ENCODE measurements at regions of chr1 and their contacts with region 1.

Region 1: DNA sequence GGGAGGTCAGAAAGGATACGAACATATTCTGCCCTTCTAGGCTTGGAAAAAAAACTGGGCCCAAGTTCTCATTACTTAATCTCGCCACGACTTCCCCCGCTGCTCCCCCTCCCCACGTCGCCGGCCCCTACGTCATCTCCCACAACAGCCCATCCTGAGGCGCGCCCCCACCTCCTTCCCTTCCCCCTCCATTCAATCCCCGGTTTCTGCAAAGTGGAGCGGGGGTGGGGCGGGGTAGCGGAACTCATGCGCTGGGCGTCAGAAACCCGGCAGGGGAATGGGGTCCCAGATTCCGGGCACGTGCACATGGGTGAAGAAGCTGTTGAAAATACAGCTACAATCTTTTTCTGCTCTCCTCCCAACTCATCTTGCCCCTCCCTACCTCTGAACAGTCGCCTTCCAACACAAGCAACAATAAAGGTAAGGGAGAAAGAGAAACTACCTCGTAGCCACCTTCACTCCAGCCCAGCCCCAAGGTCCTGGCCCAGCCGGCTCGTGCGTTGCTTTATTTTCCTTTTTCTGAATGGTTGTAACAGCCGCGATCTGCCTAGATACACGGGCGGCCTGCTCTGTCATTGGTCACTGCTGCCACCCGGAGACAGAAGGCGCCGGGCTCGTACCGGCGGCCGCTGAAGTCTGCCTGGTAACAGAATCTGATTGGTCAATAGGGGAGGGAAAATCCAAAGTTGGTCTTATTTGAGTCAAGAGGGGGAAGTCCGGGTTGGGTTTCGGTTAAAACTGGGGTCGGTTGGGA is at the start of gene RFX5:
- DNase-seq: peak; percentile 88 to 98
- ATAC-seq: peak; percentile 92 to 97 (median 92)
- H3K4me3 ChIP-seq: peak within 1 kb of the TSS; percentile 56
- H3K4me3 Mint-ChIP-seq: peak within 1 kb of the TSS; percentile 99
- H3K27ac ChIP-seq: peak within 1 kb of the TSS; percentile 89
- H3K27ac Mint-ChIP-seq: peak within 1 kb of the TSS; percentile 100
- H3K4me1 ChIP-seq: peaks cover 16% of the 10 kb centered on the region
- H3K4me1 Mint-ChIP-seq: peaks cover 31 to 32% of the 10 kb centered on the region in 2 donors
- H3K27me3 ChIP-seq: no peaks in the 10 kb centered on the region
- H3K27me3 Mint-ChIP-seq: no peaks in the 10 kb centered on the region
- CTCF ChIP-seq: no peak
- total RNA-seq, gene RFX5: 72.6 to 111 (median 110) TPM

Region 2: DNA sequence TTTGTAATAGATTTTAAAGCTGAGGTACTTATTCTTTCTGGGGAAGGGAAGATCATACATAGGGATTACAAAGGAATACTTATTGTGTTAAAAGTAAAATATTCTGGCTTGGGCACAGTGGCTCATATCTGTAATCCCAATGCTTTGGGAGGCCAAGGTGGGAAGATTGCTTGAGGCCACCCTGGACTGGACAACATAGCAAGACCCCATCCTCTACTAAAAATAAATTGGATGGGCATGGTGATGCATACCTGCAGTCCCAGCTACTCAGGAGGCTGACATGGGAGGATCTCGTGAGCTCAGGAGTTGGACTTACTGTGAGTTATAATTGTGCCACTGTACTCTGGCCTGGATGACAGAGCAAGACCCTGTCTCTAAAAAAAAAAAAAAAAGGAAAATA is 248.8 kb before region 1 on chr1:
- intact Hi-C with region 1: loop called (anchors 10 kb)
- DNase-seq: no peak
- ATAC-seq: no peak
- H3K4me3 ChIP-seq: no peak overlapping the region
- H3K4me3 Mint-ChIP-seq: no peak overlapping the region
- H3K27ac ChIP-seq: no peak overlapping the region
- H3K27ac Mint-ChIP-seq: no peak overlapping the region
- H3K4me1 ChIP-seq: no peaks in the 10 kb centered on the region
- H3K4me1 Mint-ChIP-seq: no peaks in the 10 kb centered on the region
- H3K27me3 ChIP-seq: no peaks in the 10 kb centered on the region
- H3K27me3 Mint-ChIP-seq: no peaks in the 10 kb centered on the region
- CTCF ChIP-seq: no peak

Region 3: GRCh38 chr1:151189638-151190445 is 157.1 kb before region 1 on chr1 and contains the start of gene VPS72:
- intact Hi-C with region 1: loop called (anchors 2 kb)
- DNase-seq: peak; percentile 73 to 93
- ATAC-seq: peak; percentile 95 to 98 (median 96)
- H3K4me3 ChIP-seq: peak within 1 kb of the TSS; percentile 89
- H3K4me3 Mint-ChIP-seq: peak within 1 kb of the TSS; percentile 100
- H3K27ac ChIP-seq: peak within 1 kb of the TSS; percentile 85
- H3K27ac Mint-ChIP-seq: peak within 1 kb of the TSS; percentile 97 to 98
- H3K4me1 ChIP-seq: peaks cover 19% of the 10 kb centered on the region
- H3K4me1 Mint-ChIP-seq: peaks cover 33 to 40% of the 10 kb centered on the region in 2 donors
- H3K27me3 ChIP-seq: no peaks in the 10 kb centered on the region
- H3K27me3 Mint-ChIP-seq: peaks cover 6 to 7% of the 10 kb centered on the region in 2 donors
- CTCF ChIP-seq: no peak
- total RNA-seq, gene VPS72: 26.2 to 45.1 (median 44.8) TPM

Region 4: GRCh38 chr1:151327223-151327902 is 19.6 kb before region 1 on chr1 and contains the start of gene PI4KB:
- intact Hi-C with region 1: loop called (anchors 1 kb)
- DNase-seq: peak; percentile 79 to 97
- ATAC-seq: peak; percentile 90 to 97 (median 92)
- H3K4me3 ChIP-seq: peak within 1 kb of the TSS; percentile 74
- H3K4me3 Mint-ChIP-seq: peak within 1 kb of the TSS; percentile 95
- H3K27ac ChIP-seq: peak within 1 kb of the TSS; percentile 94
- H3K27ac Mint-ChIP-seq: peak within 1 kb of the TSS; percentile 95 to 97
- H3K4me1 ChIP-seq: peaks cover 20% of the 10 kb centered on the region
- H3K4me1 Mint-ChIP-seq: peaks cover 30 to 42% of the 10 kb centered on the region in 2 donors
- H3K27me3 ChIP-seq: no peaks in the 10 kb centered on the region
- H3K27me3 Mint-ChIP-seq: no peaks in the 10 kb centered on the region
- CTCF ChIP-seq: no peak
- total RNA-seq, gene PI4KB: 68.2 to 99.3 (median 95.0) TPM

Region 5: DNA sequence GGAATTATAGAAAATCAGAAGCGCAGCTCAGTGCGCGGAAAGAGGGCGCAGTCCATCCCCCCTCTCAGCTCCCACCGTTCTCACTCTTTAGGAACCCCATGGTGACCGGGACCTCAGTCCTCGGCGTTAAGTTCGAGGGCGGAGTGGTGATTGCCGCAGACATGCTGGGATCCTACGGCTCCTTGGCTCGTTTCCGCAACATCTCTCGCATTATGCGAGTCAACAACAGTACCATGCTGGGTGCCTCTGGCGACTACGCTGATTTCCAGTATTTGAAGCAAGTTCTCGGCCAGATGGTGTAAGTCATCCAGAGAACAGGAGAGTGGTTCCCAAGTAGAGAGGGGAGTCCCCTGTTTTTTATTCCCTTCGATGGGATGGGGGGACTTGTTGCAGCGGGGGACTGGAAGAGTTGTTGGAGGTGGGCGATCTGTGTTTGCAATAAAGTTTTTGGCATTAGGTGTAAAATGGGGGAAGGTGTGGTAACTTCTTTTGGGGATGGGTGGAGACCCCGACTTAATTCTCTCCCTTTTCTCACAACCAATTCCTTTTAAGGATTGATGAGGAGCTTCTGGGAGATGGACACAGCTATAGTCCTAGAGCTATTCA is 53.0 kb after region 1 on chr1:
- intact Hi-C with region 1: loop called (anchors 2 kb)
- DNase-seq: peak in 1 of 2 donors; percentile 44
- ATAC-seq: peak; percentile 16 to 29 (median 21)
- H3K4me3 ChIP-seq: peak overlapping the region; percentile 90
- H3K4me3 Mint-ChIP-seq: peak overlapping the region; percentile 99
- H3K27ac ChIP-seq: peak overlapping the region; percentile 96
- H3K27ac Mint-ChIP-seq: peak overlapping the region; percentile 99 to 100
- H3K4me1 ChIP-seq: peaks cover 17% of the 10 kb centered on the region
- H3K4me1 Mint-ChIP-seq: peaks cover 20 to 21% of the 10 kb centered on the region in 2 donors
- H3K27me3 ChIP-seq: no peaks in the 10 kb centered on the region
- H3K27me3 Mint-ChIP-seq: no peaks in the 10 kb centered on the region
- CTCF ChIP-seq: no peak